Spleen (tissue), 13 donors: ENCODE measurements at regions of chr5 and their contacts with region 1.

Region 1: GRCh38 chr5:5419294-5420210 is 2.9 kb upstream of the ICE1 start:
- DNase-seq: no peak
- H3K4me3 ChIP-seq: no peak overlapping the region
- H3K27ac ChIP-seq: no peak overlapping the region
- H3K4me1 ChIP-seq: peaks cover 14 to 48% (median 28%) of the 10 kb centered on the region in 6 donors
- H3K27me3 ChIP-seq: no peaks in the 10 kb centered on the region
- CTCF ChIP-seq: peak in 9 of 11 experiments; percentile 33 to 80 (median 40)
- POLR2A ChIP-seq: no peak

Region 2: DNA sequence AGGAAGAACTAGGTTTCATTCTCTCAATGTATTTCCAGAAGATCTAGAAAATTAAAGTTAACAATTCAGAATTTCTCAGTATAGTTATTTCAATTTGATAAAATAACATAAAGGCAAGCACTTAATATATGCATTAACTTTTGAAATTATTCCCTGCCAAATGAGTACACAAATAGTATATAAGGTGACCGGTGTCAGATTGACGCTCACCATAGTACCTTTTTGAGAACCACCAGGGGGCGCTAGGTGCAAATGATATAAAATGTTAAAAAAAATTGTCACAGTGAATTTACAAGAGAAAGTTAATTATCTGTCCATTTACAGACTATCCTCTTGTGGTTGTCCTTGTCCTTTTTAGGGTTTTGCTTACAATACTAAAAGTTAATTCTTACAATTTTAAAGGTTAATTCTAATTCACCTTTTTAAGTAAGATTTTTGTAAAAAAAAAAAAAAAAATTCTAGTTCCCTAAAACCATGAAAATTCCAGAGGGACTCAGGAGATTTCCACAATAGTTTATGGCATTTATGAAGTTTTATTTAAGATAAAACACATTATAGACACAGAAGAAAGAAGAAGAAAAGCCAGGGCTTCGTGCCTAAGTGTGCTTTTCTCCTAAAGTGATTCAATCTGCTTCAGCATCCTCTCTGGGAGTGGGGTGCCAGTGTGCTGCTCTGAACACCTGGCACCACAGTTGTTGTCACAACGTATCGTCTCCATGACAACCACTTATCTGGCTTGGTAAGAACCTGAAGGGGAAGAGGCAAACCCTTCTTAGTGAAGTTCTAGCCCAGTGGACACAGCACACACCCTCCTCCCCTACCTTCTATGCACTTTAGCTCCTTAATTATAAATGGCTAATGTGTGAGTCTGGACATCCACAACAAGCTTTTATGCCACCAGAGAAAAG is 277.7 kb before region 1 on chr5:
- intact Hi-C with region 1: loop called (anchors 5 kb)
- DNase-seq: no peak
- H3K4me3 ChIP-seq: no peak overlapping the region
- H3K27ac ChIP-seq: no peak overlapping the region
- H3K4me1 ChIP-seq: peaks cover 5 to 25% (median 18%) of the 10 kb centered on the region in 6 donors
- H3K27me3 ChIP-seq: peaks cover 8 to 52% (median 25%) of the 10 kb centered on the region in 7 donors
- CTCF ChIP-seq: peak in 10 of 11 experiments; percentile 49 to 83 (median 65)
- POLR2A ChIP-seq: no peak

Region 3: GRCh38 chr5:5473224-5473623 is 53.7 kb after region 1 on chr5:
- intact Hi-C with region 1: no loop called
- DNase-seq: no peak
- H3K4me3 ChIP-seq: no peak overlapping the region
- H3K27ac ChIP-seq: no peak overlapping the region
- H3K4me1 ChIP-seq: no peaks in the 10 kb centered on the region
- H3K27me3 ChIP-seq: no peaks in the 10 kb centered on the region
- CTCF ChIP-seq: no peak
- POLR2A ChIP-seq: no peak

Region 4: DNA sequence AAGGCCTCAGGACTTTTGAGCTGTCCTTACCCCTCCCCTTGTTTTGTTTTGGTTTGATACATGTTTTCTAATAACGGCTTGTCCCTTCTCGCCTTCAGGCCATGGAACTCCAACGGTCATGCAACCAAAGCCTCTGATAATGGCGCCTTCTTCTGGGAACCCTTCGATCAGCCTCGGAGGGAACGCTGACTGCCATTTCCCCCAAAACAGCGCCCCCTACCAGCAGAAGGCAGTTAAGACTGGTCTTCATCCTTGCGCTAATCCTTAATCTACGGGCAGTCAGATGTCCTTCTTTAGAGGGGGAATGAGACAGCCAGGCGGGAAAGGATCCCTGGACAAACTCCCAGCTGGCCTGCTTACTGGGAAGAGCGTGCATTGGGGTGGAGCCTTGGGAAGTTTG is 279.5 kb after region 1 on chr5:
- intact Hi-C with region 1: no loop called
- DNase-seq: no peak
- H3K4me3 ChIP-seq: no peak overlapping the region
- H3K27ac ChIP-seq: no peak overlapping the region
- H3K4me1 ChIP-seq: no peaks in the 10 kb centered on the region
- H3K27me3 ChIP-seq: no peaks in the 10 kb centered on the region
- CTCF ChIP-seq: no peak
- POLR2A ChIP-seq: no peak